CD8-positive, alpha-beta T cell (primary cell): ENCODE measurements at regions of chr20 and their contacts with region 1.

Region 1: DNA sequence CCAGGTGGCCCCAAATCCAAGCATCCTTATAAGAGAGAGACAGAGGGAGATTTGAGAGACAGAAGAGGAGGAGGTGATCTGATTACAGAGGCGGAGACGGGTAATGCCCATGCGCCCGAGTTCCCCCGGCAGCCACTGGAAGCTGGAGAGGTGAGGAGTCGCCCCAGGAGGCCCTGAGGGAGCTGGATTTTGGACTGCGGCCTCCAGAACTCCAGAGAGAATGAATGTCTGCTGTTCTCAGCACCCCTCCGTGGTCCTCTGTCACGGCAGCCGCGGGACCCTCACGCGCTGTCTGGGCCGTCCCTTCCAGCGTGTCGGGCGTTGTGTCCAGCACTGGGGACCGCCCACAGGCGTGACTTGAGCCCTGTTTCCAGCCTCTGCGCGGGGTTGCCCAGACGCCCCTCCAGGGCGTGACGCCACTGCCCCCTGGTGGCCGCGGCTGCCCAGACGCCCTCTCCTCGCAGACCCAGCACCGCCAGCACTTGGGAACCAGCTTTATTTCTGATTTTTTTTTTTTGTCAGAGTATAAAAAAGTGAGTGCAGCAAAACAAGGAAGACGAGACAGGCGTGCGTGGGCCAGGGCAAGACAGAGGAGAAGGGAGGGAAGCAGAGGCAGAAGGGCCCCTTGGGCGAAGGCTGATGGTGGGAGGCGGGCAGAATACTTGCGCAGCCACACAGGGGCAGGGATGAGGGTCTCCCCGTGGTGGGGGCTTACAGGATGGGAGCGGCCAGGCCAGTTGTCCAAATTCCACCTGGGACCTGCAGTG is 4.1 kb upstream of the ZNF512B start:
- DNase-seq: peak; percentile 57 to 87 (median 77)
- ATAC-seq: peak; percentile 51
- H3K4me3 ChIP-seq: no peak overlapping the region
- H3K4me3 Mint-ChIP-seq: no peak overlapping the region
- H3K27ac ChIP-seq: no peak overlapping the region
- H3K27ac Mint-ChIP-seq: peak overlapping the region; percentile 53
- H3K4me1 ChIP-seq: peaks cover 35% of the 10 kb centered on the region
- H3K4me1 Mint-ChIP-seq: peaks cover 42% of the 10 kb centered on the region
- H3K27me3 ChIP-seq: no peaks in the 10 kb centered on the region
- H3K27me3 Mint-ChIP-seq: no peaks in the 10 kb centered on the region
- CTCF ChIP-seq: peak; percentile 99

Region 2: GRCh38 chr20:63495741-63496595 is 477.9 kb before region 1 on chr20:
- CTCF ChIA-PET with region 1: interaction called, 9 read pairs
- POLR2A ChIA-PET with region 1: no interaction called
- intact Hi-C with region 1: loop called in 1 of 2 experiments (anchors 1 kb)
- DNase-seq: peak; percentile 48 to 86 (median 78)
- ATAC-seq: peak; percentile 74
- H3K4me3 ChIP-seq: peak overlapping the region; percentile 15 to 18
- H3K4me3 Mint-ChIP-seq: peak overlapping the region; percentile 39
- H3K27ac ChIP-seq: no peak overlapping the region
- H3K27ac Mint-ChIP-seq: no peak overlapping the region
- H3K4me1 ChIP-seq: peaks cover 16% of the 10 kb centered on the region
- H3K4me1 Mint-ChIP-seq: peaks cover 5% of the 10 kb centered on the region
- H3K27me3 ChIP-seq: peaks cover 9 to 33% of the 10 kb centered on the region in 2 experiments
- H3K27me3 Mint-ChIP-seq: peaks cover 10% of the 10 kb centered on the region
- CTCF ChIP-seq: peak; percentile 95

Region 3: GRCh38 chr20:63782051-63782471 is 191.8 kb before region 1 on chr20:
- CTCF ChIA-PET with region 1: interaction called, 6 read pairs
- POLR2A ChIA-PET with region 1: no interaction called
- intact Hi-C with region 1: loop called in 1 of 2 experiments (anchors 1 kb)
- DNase-seq: peak in 8 of 9 experiments; percentile 11 to 93 (median 76)
- ATAC-seq: peak; percentile 94
- H3K4me3 ChIP-seq: no peak overlapping the region
- H3K4me3 Mint-ChIP-seq: peak overlapping the region; percentile 39
- H3K27ac ChIP-seq: peak overlapping the region in 1 of 2 experiments; percentile 50
- H3K27ac Mint-ChIP-seq: peak overlapping the region; percentile 81
- H3K4me1 ChIP-seq: peaks cover 12% of the 10 kb centered on the region
- H3K4me1 Mint-ChIP-seq: peaks cover 18% of the 10 kb centered on the region
- H3K27me3 ChIP-seq: no peaks in the 10 kb centered on the region
- H3K27me3 Mint-ChIP-seq: no peaks in the 10 kb centered on the region
- CTCF ChIP-seq: peak; percentile 23

Region 4: GRCh38 chr20:63955827-63956663 is 17.8 kb before region 1 on chr20 and contains the start of gene UCKL1:
- CTCF ChIA-PET with region 1: interaction called, 20 read pairs
- POLR2A ChIA-PET with region 1: interaction called, 18 read pairs
- intact Hi-C with region 1: loop called (anchors 1 kb)
- DNase-seq: peak; percentile 78 to 93 (median 89)
- ATAC-seq: peak; percentile 81
- H3K4me3 ChIP-seq: peak within 1 kb of the TSS; percentile 73 to 95
- H3K4me3 Mint-ChIP-seq: peak within 1 kb of the TSS; percentile 82
- H3K27ac ChIP-seq: peak within 1 kb of the TSS; percentile 64 to 77
- H3K27ac Mint-ChIP-seq: peak within 1 kb of the TSS; percentile 76
- H3K4me1 ChIP-seq: peaks cover 28% of the 10 kb centered on the region
- H3K4me1 Mint-ChIP-seq: peaks cover 34% of the 10 kb centered on the region
- H3K27me3 ChIP-seq: no peaks in the 10 kb centered on the region
- H3K27me3 Mint-ChIP-seq: no peaks in the 10 kb centered on the region
- CTCF ChIP-seq: no peak
- total RNA-seq, gene UCKL1: 29.6 to 33.7 TPM